OCI-LY7 (cell line): ENCODE measurements at regions of chr14 and their contacts with region 1.

Region 1: GRCh38 chr14:75249251-75249957 is 29.2 kb upstream of the FOS start:
- DNase-seq: peak; percentile 97
- H3K4me3 ChIP-seq: peak overlapping the region; percentile 49
- H3K27ac ChIP-seq: peak overlapping the region; percentile 88
- H3K4me1 ChIP-seq: peaks cover 56% of the 10 kb centered on the region
- CTCF ChIP-seq: no peak

Region 2: GRCh38 chr14:75176142-75176820 is 73.1 kb before region 1 on chr14 and contains the start of gene TMED10:
- CTCF ChIA-PET with region 1: no interaction called
- POLR2A ChIA-PET with region 1: interaction called, 3 read pairs
- intact Hi-C with region 1: loop called (anchors 1 kb)
- DNase-seq: peak; percentile 95
- H3K4me3 ChIP-seq: peak within 1 kb of the TSS; percentile 77
- H3K27ac ChIP-seq: peak within 1 kb of the TSS; percentile 88
- H3K4me1 ChIP-seq: peaks cover 35% of the 10 kb centered on the region
- CTCF ChIP-seq: no peak
- total RNA-seq, gene TMED10: 63.1 and 129 TPM in 2 replicates

Region 3: DNA sequence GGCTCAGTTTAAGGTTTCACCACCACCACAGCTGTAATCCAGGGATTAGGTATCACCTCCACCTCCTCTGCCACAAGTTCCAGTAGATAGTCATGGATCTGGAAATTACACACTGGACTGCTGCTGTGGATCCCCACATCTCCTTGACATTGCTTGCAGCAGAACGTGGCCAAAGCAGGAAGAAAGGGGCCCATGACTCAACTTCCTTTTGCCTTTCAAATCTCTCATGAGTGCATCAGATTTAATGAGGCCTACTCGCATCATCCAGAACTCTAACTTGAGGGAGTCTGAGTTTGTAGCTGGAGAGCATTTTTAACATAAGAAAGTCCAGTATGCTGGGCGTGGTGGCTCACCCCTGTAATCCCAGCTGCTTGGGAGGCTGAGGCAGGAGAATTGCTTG is 43.8 kb before region 1 on chr14:
- CTCF ChIA-PET with region 1: no interaction called
- POLR2A ChIA-PET with region 1: no interaction called
- intact Hi-C with region 1: no loop called
- DNase-seq: no peak
- H3K4me3 ChIP-seq: no peak overlapping the region
- H3K27ac ChIP-seq: no peak overlapping the region
- H3K4me1 ChIP-seq: peaks cover 6% of the 10 kb centered on the region
- CTCF ChIP-seq: no peak

Region 4: DNA sequence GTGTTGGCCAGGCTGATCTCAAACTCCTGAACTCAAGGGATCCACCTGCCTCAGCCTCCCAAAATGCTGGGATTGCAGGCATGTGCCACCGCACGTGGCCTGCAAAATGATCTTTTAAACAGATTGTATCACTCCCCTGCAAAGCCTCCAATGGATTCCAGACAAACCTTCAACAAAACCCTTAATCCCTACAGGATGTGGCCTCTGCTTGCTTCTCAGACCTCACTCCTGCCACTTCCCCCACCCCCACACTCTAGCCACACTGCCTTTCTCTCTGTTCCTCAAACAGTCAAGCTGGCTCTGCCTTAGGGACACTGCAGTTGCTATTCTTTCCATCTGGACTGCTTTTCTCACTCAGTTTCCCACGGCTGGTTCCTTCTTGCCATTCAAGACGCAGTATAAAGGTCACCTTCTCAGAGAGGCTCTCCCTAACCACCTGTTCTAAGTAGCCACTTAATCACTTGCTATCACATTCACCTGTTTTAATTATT is 25.7 kb before region 1 on chr14:
- CTCF ChIA-PET with region 1: no interaction called
- POLR2A ChIA-PET with region 1: interaction called, 4 read pairs
- intact Hi-C with region 1: loop called (anchors 2 kb)
- DNase-seq: peak; percentile 79
- H3K4me3 ChIP-seq: peak overlapping the region; percentile 21
- H3K27ac ChIP-seq: peak overlapping the region; percentile 51
- H3K4me1 ChIP-seq: peaks cover 49% of the 10 kb centered on the region
- CTCF ChIP-seq: no peak

Region 5: GRCh38 chr14:75238756-75239455 is 10.5 kb before region 1 on chr14:
- CTCF ChIA-PET with region 1: no interaction called
- POLR2A ChIA-PET with region 1: interaction called, 22 read pairs
- intact Hi-C with region 1: no loop called
- DNase-seq: no peak
- H3K4me3 ChIP-seq: no peak overlapping the region
- H3K27ac ChIP-seq: no peak overlapping the region
- H3K4me1 ChIP-seq: peaks cover 14% of the 10 kb centered on the region
- CTCF ChIP-seq: no peak

Region 6: GRCh38 chr14:75293920-75294642 is 44.7 kb after region 1 on chr14:
- CTCF ChIA-PET with region 1: no interaction called
- POLR2A ChIA-PET with region 1: interaction called, 3 read pairs
- intact Hi-C with region 1: loop called (anchors 1 kb)
- DNase-seq: peak; percentile 92
- H3K4me3 ChIP-seq: peak overlapping the region; percentile 74
- H3K27ac ChIP-seq: no peak overlapping the region
- H3K4me1 ChIP-seq: peaks cover 21% of the 10 kb centered on the region
- CTCF ChIP-seq: no peak